ENCODE measurements at regions of chr12 and their contacts with region 1.

Region 1: DNA sequence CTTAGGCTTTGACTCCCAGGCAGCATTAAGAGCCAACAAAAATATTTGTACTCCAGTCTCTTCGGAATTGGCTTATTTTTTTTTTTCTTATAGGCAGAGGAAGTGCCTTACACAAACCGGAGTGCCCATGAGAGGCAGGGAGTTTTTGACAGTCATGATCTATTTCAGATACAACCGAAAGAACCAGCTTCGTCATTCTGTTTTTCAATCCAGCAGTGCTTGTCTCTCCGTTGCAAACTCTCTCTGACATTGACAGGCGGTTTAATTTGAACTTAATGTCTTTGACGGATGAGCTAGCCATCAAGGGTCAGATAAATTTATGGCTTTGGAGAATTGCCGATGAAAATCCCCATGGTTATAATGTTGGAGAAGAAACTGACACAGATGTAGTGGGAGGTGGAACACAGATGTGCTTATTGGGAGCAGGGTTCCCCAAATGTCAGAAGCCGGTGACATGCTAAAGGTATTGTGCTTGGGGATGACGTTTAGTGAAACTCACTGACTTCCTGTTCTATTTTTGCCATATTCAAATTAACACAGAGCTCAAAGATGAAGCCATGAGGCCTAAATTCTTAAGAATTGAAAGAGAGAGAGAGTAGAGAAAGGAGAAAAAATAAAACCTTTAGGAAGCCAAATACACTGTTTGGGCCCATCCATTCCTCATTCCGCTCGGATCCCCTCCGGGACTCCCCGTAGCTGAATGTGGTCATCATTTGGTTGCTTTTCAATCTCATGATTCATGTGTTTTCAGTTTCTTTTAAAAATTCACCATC is 59.7 kb downstream of the PLXNC1 start:
- DNase-seq: peak; percentile 62
- ATAC-seq: peak; percentile 80
- H3K4me3 Mint-ChIP-seq: peak overlapping the region; percentile 68
- H3K27ac Mint-ChIP-seq: peak overlapping the region; percentile 99
- H3K4me1 Mint-ChIP-seq: peaks cover 51% of the 10 kb centered on the region
- H3K27me3 Mint-ChIP-seq: no peaks in the 10 kb centered on the region

Region 2: DNA sequence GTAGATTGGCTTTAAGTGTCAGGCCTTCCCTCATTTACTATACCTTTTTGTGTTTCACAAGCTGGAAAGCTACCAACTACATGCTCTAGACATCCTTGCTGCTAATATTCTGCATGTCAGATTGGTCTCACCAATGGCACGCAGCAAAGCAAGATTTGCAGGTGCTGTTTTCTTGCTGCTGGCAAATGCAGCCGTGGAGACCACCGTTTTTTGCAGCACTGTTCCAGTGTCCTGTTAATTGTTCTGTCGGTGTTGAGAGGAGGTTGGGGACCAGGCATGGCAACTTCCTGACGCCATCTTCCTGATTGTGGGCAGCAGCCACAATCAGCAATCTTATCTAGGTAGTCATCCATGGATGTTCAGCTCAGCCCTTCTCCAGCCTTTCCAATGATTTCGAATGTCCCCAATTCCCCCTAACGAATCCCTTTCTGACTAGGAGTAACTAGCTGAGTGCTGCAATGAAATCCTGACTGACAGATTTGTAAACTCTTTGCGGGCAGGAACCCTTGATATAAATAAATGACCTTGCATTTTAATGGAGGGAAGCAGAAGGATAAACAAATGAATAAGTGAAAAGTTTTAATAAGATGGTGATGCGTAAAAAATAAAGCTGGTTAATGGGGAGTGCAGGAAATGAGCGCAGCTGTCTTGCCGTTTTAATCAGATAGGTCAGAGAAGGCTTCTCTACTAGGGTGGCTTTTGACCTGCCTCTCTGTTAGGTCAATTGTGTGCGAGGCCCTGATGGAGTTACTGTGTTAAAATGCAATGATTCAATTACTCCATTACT is 531.4 kb before region 1 on chr12:
- CTCF ChIA-PET with region 1: no interaction called
- POLR2A ChIA-PET with region 1: no interaction called
- intact Hi-C with region 1: no loop called
- DNase-seq: peak; percentile 9
- ATAC-seq: no peak
- H3K4me3 Mint-ChIP-seq: peak overlapping the region; percentile 97
- H3K27ac Mint-ChIP-seq: peak overlapping the region; percentile 100
- H3K4me1 Mint-ChIP-seq: peaks cover 29% of the 10 kb centered on the region
- H3K27me3 Mint-ChIP-seq: peaks cover 8% of the 10 kb centered on the region

Region 3: DNA sequence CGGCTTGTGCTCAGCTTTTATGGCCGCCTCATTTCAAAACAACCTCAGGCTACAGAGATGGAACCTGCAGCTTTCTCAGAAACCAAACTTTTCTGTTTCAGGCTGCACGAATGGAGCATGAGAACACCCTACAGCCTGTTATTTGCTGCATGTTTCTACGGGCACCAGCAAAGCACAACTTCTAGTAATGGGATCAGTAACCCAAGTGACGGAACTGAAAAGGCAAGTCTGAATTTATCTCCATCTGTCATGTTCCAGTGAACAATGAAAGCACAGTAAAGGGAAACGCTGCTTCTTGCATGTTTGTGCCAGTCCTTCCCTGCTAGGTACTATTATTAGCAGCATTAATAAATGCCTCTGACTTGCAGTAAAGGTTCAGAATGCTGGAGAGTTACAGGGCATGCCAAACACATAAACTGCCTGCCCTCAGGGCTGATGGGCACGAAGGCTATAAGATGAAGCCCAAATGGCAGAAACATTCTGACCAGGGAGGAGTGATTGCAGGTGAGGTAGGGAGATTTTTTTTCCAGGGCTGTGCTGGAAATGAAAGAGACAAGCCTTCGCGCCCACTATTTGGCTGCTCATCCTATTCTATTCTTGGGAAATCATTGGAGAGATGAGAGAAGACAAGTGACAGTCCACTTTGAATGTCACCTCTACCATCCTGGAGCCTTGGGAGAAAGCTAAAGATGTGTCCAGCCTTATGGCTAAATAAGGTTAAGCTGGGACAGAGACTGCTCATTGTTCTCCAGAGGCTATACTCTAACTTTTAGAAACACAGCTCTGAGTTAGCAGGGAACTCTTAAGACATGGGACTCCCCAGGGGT is 160.1 kb before region 1 on chr12:
- CTCF ChIA-PET with region 1: no interaction called
- POLR2A ChIA-PET with region 1: no interaction called
- intact Hi-C with region 1: no loop called
- DNase-seq: no peak
- ATAC-seq: no peak
- H3K4me3 Mint-ChIP-seq: no peak overlapping the region
- H3K27ac Mint-ChIP-seq: no peak overlapping the region
- H3K4me1 Mint-ChIP-seq: peaks cover 13% of the 10 kb centered on the region
- H3K27me3 Mint-ChIP-seq: no peaks in the 10 kb centered on the region

Region 4: DNA sequence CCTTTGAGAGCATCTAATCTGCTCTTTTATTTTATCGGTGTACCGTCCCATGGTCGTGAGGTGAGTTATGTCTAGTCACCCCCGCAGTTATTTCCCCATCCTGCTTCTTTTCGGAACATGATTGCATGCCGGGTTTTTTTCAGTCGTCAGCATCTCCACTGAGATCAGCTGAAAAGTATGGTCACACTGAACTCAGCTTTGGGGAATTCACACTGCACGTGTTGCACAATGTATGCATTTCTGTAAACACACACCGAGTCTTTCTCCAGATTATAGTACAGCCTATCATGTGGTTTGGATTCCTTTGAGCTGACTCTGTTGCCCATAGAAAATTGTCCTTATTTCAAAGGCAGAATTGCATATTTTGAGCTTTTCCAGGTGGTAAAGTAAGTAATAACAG is 35.1 kb before region 1 on chr12:
- CTCF ChIA-PET with region 1: interaction called, 4 read pairs
- POLR2A ChIA-PET with region 1: interaction called, 3 read pairs
- intact Hi-C with region 1: loop called (anchors 2 kb)
- DNase-seq: no peak
- ATAC-seq: no peak
- H3K4me3 Mint-ChIP-seq: no peak overlapping the region
- H3K27ac Mint-ChIP-seq: no peak overlapping the region
- H3K4me1 Mint-ChIP-seq: peaks cover 73% of the 10 kb centered on the region
- H3K27me3 Mint-ChIP-seq: no peaks in the 10 kb centered on the region

Region 5: GRCh38 chr12:94269316-94269999 is 61.4 kb after region 1 on chr12:
- CTCF ChIA-PET with region 1: interaction called, 11 read pairs
- POLR2A ChIA-PET with region 1: interaction called, 11 read pairs
- intact Hi-C with region 1: loop called (anchors 1 kb)
- DNase-seq: no peak
- ATAC-seq: peak; percentile 86
- H3K4me3 Mint-ChIP-seq: peak overlapping the region; percentile 24
- H3K27ac Mint-ChIP-seq: peak overlapping the region; percentile 63
- H3K4me1 Mint-ChIP-seq: peaks cover 63% of the 10 kb centered on the region
- H3K27me3 Mint-ChIP-seq: no peaks in the 10 kb centered on the region

Region 6: GRCh38 chr12:94326727-94327126 is 118.7 kb after region 1 on chr12:
- CTCF ChIA-PET with region 1: no interaction called
- POLR2A ChIA-PET with region 1: no interaction called
- intact Hi-C with region 1: no loop called
- DNase-seq: no peak
- ATAC-seq: peak; percentile 86
- H3K4me3 Mint-ChIP-seq: no peak overlapping the region
- H3K27ac Mint-ChIP-seq: no peak overlapping the region
- H3K4me1 Mint-ChIP-seq: peaks cover 19% of the 10 kb centered on the region
- H3K27me3 Mint-ChIP-seq: no peaks in the 10 kb centered on the region

Region 7: DNA sequence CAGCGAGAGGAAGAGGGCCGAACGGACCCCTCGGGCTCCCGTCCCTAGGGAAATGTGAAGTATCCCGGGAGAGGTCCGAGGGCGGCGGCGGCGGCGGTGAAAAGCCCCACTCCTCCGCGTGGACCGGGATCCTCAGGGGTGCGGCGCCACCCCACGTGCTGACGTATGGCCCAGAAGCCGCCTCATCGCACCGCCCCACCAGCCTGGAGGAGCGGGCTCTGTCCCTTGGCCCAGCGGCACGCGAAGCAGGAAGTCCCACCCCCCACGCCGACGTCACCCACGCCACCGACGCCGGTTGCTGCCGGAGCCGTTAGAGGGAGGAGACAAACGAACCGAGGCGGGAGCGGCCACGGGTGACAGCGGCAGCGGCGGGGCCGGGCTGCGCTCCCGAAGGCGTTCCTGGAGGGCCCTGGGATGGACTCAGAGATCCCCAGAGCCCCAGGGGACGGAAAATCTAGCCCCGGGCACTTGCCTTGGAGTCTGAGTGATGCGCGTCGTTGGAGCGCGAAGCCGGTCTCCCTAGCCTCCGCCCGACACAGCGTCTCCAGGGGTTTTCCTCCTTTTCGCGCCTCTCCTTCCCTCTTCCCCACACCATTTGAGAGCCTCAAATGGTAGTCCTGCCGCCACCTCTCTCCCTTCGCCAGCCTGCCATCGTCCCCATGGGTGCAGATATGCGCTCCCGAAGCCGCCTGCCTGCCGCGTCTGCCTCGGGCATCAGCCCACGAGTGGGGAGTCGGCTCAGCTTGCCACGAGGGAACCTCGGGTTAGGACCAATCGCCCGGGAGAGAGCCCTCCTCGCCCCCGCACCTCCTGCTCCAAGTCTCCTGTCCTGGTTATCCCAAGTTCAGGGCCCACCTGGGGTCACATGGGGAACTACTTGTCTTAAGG is 251.9 kb after region 1 on chr12 and contains the start of gene CEP83:
- CTCF ChIA-PET with region 1: interaction called, 6 read pairs
- POLR2A ChIA-PET with region 1: no interaction called
- intact Hi-C with region 1: loop called (anchors 1 to 5 kb)
- DNase-seq: peak; percentile 98
- ATAC-seq: peak; percentile 99
- H3K4me3 Mint-ChIP-seq: peak within 1 kb of the TSS; percentile 96
- H3K27ac Mint-ChIP-seq: peak within 1 kb of the TSS; percentile 95
- H3K4me1 Mint-ChIP-seq: peaks cover 30% of the 10 kb centered on the region
- H3K27me3 Mint-ChIP-seq: peaks cover 10% of the 10 kb centered on the region
- total RNA-seq, gene CEP83: 21.9 to 22.6 TPM

Measured in activated CD4-positive, alpha-beta T cell treated with anti-CD3 and anti-CD28 coated beads for 36 hours (primary cell).